Keratinocyte (primary cell): ENCODE measurements at regions of chr10 and their contacts with region 1.

Region 1: GRCh38 chr10:45249978-45250693 is 65.3 kb downstream of the OR13A1 start:
- DNase-seq: no peak
- H3K4me3 ChIP-seq: no peak overlapping the region
- H3K27ac ChIP-seq: no peak overlapping the region
- H3K4me1 ChIP-seq: no peaks in the 10 kb centered on the region
- H3K27me3 ChIP-seq: peaks cover 6% of the 10 kb centered on the region
- CTCF ChIP-seq: peak in 2 of 3 experiments; percentile 28 to 47

Region 2: DNA sequence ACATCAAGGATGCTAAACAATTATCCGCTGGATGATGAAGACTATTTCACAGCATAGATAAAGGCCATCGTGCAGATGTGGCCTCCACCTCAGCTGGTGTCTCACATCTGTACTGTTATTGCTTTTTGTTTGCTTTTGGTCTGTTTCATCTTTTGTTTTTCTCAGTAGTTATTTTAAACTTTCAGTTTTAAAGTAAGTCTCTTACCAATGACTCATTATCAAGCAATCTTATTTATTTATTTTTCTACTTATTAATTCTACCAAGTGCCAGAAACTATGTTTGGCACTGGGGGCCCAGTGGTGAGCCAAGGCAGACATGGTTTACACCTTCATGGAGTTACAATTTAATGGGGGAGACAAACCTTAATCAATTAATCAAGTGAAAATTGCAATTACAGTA is 589.9 kb before region 1 on chr10:
- dilution Hi-C with region 1: no loop called
- DNase-seq: no peak
- H3K4me3 ChIP-seq: no peak overlapping the region
- H3K27ac ChIP-seq: no peak overlapping the region
- H3K4me1 ChIP-seq: no peaks in the 10 kb centered on the region
- H3K27me3 ChIP-seq: no peaks in the 10 kb centered on the region
- CTCF ChIP-seq: no peak

Region 3: GRCh38 chr10:45008524-45009161 is 241.5 kb before region 1 on chr10:
- dilution Hi-C with region 1: loop called (anchors 25 kb)
- DNase-seq: peak; percentile 62
- H3K4me3 ChIP-seq: no peak overlapping the region
- H3K27ac ChIP-seq: no peak overlapping the region
- H3K4me1 ChIP-seq: no peaks in the 10 kb centered on the region
- H3K27me3 ChIP-seq: no peaks in the 10 kb centered on the region
- CTCF ChIP-seq: peak; percentile 55 to 89 (median 62)

Region 4: DNA sequence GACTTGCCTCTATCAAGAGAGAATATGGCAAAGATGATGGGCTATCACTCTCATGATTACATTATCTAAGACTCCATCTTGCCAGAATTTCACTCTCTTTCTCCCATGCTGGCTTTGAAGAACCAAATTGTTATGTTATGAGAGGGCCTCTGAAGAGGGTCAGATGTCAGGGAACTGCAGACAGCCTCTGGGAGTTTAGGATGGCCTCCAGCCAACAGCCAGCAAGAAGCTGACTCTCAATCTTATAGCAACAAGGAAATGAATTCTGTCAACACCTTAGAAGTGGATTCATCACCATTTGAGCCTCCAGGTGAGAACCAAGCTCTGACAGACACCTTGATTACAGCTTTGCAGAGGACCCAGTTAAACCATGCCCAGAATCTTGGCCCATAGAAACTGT is 215.8 kb before region 1 on chr10:
- dilution Hi-C with region 1: no loop called
- DNase-seq: no peak
- H3K4me3 ChIP-seq: no peak overlapping the region
- H3K27ac ChIP-seq: no peak overlapping the region
- H3K4me1 ChIP-seq: no peaks in the 10 kb centered on the region
- H3K27me3 ChIP-seq: no peaks in the 10 kb centered on the region
- CTCF ChIP-seq: no peak

Region 5: GRCh38 chr10:45308707-45309106 is 58.6 kb after region 1 on chr10:
- dilution Hi-C with region 1: no loop called
- DNase-seq: no peak
- H3K4me3 ChIP-seq: no peak overlapping the region
- H3K27ac ChIP-seq: no peak overlapping the region
- H3K4me1 ChIP-seq: no peaks in the 10 kb centered on the region
- H3K27me3 ChIP-seq: no peaks in the 10 kb centered on the region
- CTCF ChIP-seq: no peak